ENCODE measurements at regions of chrX and their contacts with region 1.

Region 1: GRCh38 chrX:101595739-101596419 is 21.9 kb downstream of the ARMCX6 start:
- DNase-seq: no peak
- ATAC-seq: peak in 1 of 2 donors; percentile 81
- H3K4me3 ChIP-seq: no peak overlapping the region
- H3K27ac ChIP-seq: no peak overlapping the region
- H3K4me1 ChIP-seq: no peaks in the 10 kb centered on the region
- H3K27me3 ChIP-seq: peaks cover 0 to 9% (median 0%) of the 10 kb centered on the region in 3 donors
- CTCF ChIP-seq: peak; percentile 36 to 57 (median 48)
- POLR2A ChIP-seq: no peak

Region 2: DNA sequence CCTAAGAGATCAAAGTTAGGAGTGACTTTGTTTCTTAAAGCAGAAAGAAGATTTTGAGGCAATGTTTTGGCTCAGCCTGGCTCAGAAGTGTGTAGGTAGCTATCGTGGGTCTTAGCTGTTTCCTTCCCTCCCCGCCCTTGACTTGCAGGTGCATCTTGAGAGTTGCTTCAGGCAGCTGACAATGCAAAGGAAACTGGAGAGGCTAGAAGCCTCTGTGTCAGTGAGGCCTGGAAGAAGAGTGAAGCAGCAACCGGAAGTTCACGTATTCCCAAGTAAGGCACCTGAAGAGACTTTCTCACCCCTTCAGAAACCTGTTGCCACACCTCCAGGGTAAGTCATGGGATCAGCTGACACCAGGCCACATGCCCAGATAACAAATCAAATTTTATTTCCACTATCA is 656.5 kb before region 1 on chrX:
- in situ Hi-C with region 1: no loop called
- intact Hi-C with region 1: no loop called
- DNase-seq: no peak
- ATAC-seq: no peak
- H3K4me3 ChIP-seq: no peak overlapping the region
- H3K27ac ChIP-seq: no peak overlapping the region
- H3K4me1 ChIP-seq: no peaks in the 10 kb centered on the region
- H3K27me3 ChIP-seq: no peaks in the 10 kb centered on the region
- CTCF ChIP-seq: no peak
- POLR2A ChIP-seq: no peak

Region 3: GRCh38 chrX:101551380-101551767 is 44.5 kb before region 1 on chrX:
- in situ Hi-C with region 1: no loop called
- intact Hi-C with region 1: no loop called
- DNase-seq: no peak
- ATAC-seq: no peak
- H3K4me3 ChIP-seq: peak overlapping the region; percentile 59 to 79 (median 64)
- H3K27ac ChIP-seq: peak overlapping the region; percentile 77 to 87 (median 86)
- H3K4me1 ChIP-seq: no peaks in the 10 kb centered on the region
- H3K27me3 ChIP-seq: no peaks in the 10 kb centered on the region
- CTCF ChIP-seq: no peak
- POLR2A ChIP-seq: no peak

Region 4: GRCh38 chrX:101759000-101759399 is 163.1 kb after region 1 on chrX:
- in situ Hi-C with region 1: loop called in 1 of 4 experiments (anchors 25 kb)
- intact Hi-C with region 1: no loop called
- DNase-seq: no peak
- ATAC-seq: no peak
- H3K4me3 ChIP-seq: no peak overlapping the region
- H3K27ac ChIP-seq: no peak overlapping the region
- H3K4me1 ChIP-seq: no peaks in the 10 kb centered on the region
- H3K27me3 ChIP-seq: no peaks in the 10 kb centered on the region
- CTCF ChIP-seq: peak in 3 of 5 experiments; percentile 20 to 45 (median 28)
- POLR2A ChIP-seq: no peak

Region 5: DNA sequence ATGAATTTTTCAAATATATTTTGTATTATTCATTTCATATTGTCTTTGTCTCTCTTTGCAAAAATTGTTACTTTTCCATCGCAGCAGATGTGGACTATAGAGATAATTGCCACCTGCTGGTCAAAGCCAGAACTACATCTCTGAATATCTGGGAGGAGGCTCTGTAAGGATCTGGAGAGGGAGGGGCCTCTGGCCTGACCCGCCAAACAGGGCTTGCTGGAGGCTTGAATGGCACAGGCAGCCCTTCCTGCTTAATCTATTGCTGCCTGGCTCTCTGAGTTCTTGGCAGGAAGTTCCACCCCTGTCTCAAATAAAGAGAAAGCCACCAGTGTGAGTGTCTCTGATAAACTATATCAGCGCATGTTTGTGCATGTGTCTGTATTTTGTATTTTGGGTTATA is 203.5 kb after region 1 on chrX:
- in situ Hi-C with region 1: loop called in 3 of 4 experiments (anchors 10 to 25 kb)
- intact Hi-C with region 1: loop called (anchors 5 kb)
- DNase-seq: peak; percentile 37 to 54
- ATAC-seq: peak; percentile 65 to 84
- H3K4me3 ChIP-seq: no peak overlapping the region
- H3K27ac ChIP-seq: no peak overlapping the region
- H3K4me1 ChIP-seq: no peaks in the 10 kb centered on the region
- H3K27me3 ChIP-seq: no peaks in the 10 kb centered on the region
- CTCF ChIP-seq: peak; percentile 39 to 69 (median 61)
- POLR2A ChIP-seq: no peak